ENCODE measurements at regions of chr11 and their contacts with region 1.

Region 1: GRCh38 chr11:131748151-131749050 is 378.0 kb downstream of the NTM start:
- DNase-seq: peak; percentile 33
- H3K4me3 Mint-ChIP-seq: no peak overlapping the region
- H3K27ac Mint-ChIP-seq: no peak overlapping the region
- H3K4me1 Mint-ChIP-seq: no peaks in the 10 kb centered on the region
- H3K27me3 Mint-ChIP-seq: no peaks in the 10 kb centered on the region

Region 2: GRCh38 chr11:131767421-131767820 is 19.0 kb after region 1 on chr11:
- CTCF ChIA-PET with region 1: no interaction called
- POLR2A ChIA-PET with region 1: no interaction called
- DNase-seq: no peak
- H3K4me3 Mint-ChIP-seq: no peak overlapping the region
- H3K27ac Mint-ChIP-seq: no peak overlapping the region
- H3K4me1 Mint-ChIP-seq: no peaks in the 10 kb centered on the region
- H3K27me3 Mint-ChIP-seq: no peaks in the 10 kb centered on the region

Region 3: DNA sequence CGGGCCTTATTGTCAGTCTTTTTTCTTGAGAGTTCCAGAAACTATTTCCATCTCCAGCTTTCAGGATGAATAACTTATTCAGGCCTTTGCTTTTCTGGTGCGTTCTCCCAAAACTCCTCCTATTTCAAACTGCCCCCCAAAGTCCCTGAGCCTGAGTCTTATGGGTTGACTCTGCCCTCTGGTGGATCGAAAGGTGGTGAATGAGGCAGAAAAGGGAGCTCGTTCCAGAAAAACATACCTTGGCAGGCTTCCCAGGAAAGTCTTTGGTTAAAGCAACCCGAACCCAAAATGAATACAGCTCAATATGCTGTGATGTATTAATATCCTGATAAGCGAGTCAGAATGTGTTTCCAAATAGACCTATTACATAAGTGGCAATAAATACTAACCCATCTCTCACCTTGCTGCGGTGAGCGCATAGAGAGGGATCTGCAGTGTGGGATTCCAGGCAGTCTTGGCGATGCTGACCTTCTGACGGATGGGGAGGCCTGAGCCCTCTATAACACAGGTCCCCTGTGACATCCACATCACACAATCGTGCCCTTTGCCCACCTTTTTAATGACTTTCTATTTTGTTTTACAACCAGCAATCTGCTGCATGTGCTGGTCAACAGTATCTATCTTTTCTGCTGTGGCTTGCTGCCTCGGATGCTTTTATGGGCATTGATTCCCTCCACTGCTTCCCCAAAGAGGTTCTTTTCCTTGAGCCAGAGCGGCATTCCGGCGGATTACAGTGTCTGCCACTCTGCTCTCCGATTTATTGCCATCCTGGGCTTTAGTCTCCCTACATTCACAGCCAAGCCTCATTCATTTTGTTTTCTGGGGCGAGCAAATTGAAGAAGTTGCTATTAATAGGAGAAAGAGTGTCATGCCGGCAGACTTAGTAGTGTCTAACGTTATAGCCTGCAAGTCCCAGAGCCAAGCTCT is 378.8 kb after region 1 on chr11:
- CTCF ChIA-PET with region 1: interaction called, 10 read pairs
- POLR2A ChIA-PET with region 1: no interaction called
- DNase-seq: no peak
- H3K4me3 Mint-ChIP-seq: no peak overlapping the region
- H3K27ac Mint-ChIP-seq: no peak overlapping the region
- H3K4me1 Mint-ChIP-seq: no peaks in the 10 kb centered on the region
- H3K27me3 Mint-ChIP-seq: no peaks in the 10 kb centered on the region

Region 4: GRCh38 chr11:132941024-132941646 is 1192.7 kb after region 1 on chr11:
- CTCF ChIA-PET with region 1: interaction called, 15 read pairs
- POLR2A ChIA-PET with region 1: no interaction called
- DNase-seq: no peak
- H3K4me3 Mint-ChIP-seq: no peak overlapping the region
- H3K27ac Mint-ChIP-seq: no peak overlapping the region
- H3K4me1 Mint-ChIP-seq: peaks cover 2% of the 10 kb centered on the region
- H3K27me3 Mint-ChIP-seq: peaks cover 27% of the 10 kb centered on the region

Measured in activated CD4-positive, alpha-beta memory T cell treated with anti-CD3 and anti-CD28 coated beads, Interleukin-2, amount 10 ng/mL, durations not matched to agents 7 days and 5 days (primary cell).